IMR-90 (cell line): ENCODE measurements at regions of chr6 and their contacts with region 1.

Region 1: GRCh38 chr6:113858480-113859348 is 1.6 kb downstream of the MARCKS start:
- DNase-seq: peak; percentile 87
- ATAC-seq: peak; percentile 69
- H3K4me3 ChIP-seq: peak overlapping the region; percentile 95
- H3K27ac ChIP-seq: peak overlapping the region; percentile 96
- H3K4me1 ChIP-seq: no peaks in the 10 kb centered on the region
- H3K27me3 ChIP-seq: no peaks in the 10 kb centered on the region
- CTCF ChIP-seq: peak; percentile 96
- POLR2A ChIP-seq: peak; percentile 71; the same call in 1 of the 2 replicates
- RAD21 ChIP-seq: peak; percentile 95

Region 2: GRCh38 chr6:112780498-112781096 is 1078.1 kb before region 1 on chr6:
- CTCF ChIA-PET with region 1: interaction called, 6 read pairs
- POLR2A ChIA-PET with region 1: no interaction called
- dilution Hi-C with region 1: no loop called
- in situ Hi-C with region 1: no loop called
- intact Hi-C with region 1: loop called (anchors 1 kb)
- DNase-seq: peak; percentile 84
- ATAC-seq: peak; percentile 88
- H3K4me3 ChIP-seq: no peak overlapping the region
- H3K27ac ChIP-seq: no peak overlapping the region
- H3K4me1 ChIP-seq: peaks cover 2% of the 10 kb centered on the region; the same call in 1 of the 2 replicates
- H3K27me3 ChIP-seq: no peaks in the 10 kb centered on the region
- CTCF ChIP-seq: peak; percentile 88
- POLR2A ChIP-seq: no peak
- RAD21 ChIP-seq: peak; percentile 92

Region 3: GRCh38 chr6:113147544-113147943 is 711.2 kb before region 1 on chr6:
- CTCF ChIA-PET with region 1: no interaction called
- POLR2A ChIA-PET with region 1: no interaction called
- dilution Hi-C with region 1: no loop called
- in situ Hi-C with region 1: no loop called
- intact Hi-C with region 1: loop called (anchors 1 kb)
- DNase-seq: peak; percentile 94
- ATAC-seq: peak; percentile 97
- H3K4me3 ChIP-seq: no peak overlapping the region
- H3K27ac ChIP-seq: 0 out of 2 replicates have a peak overlapping the region, but pooled peaks have one; percentile 33
- H3K4me1 ChIP-seq: peaks cover 7% of the 10 kb centered on the region
- H3K27me3 ChIP-seq: no peaks in the 10 kb centered on the region
- CTCF ChIP-seq: no peak
- POLR2A ChIP-seq: no peak
- RAD21 ChIP-seq: no peak

Region 4: DNA sequence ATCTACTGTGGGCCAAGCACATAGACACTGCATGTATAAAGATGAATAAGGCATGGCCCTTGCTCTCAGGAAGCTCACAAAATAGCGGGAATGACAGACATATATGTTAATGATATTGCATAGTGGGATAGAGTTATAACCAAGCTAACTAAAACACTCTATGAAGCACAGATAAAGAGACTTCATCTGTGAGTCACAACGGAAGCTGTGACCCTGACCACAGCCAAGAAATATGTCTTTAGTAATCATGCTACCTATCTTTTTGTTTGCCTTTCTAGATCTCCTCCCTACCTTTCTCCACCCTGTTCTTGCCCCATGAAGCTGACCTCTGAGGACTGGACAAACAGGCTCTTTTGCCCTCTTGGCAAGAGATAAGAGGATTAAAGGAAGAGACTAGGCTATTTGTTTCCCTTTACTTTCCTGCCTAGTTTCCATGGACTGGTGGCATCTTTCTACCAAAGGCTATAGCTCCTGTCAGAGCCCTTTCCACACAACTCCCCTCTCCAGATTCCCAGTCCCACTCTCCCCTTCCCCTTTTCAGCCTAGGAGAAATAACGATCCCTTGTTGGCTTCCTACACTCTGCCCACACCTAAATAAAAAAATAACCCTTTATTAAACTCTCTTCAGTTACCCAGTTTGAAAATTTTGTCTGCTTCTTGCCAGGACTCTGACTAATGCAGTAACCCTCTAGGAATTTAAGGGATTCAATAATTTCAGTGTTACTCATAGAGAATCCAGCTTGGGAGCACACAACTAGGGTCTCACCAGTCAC is 506.5 kb before region 1 on chr6:
- CTCF ChIA-PET with region 1: interaction called, 3 read pairs
- POLR2A ChIA-PET with region 1: no interaction called
- dilution Hi-C with region 1: no loop called
- in situ Hi-C with region 1: no loop called
- intact Hi-C with region 1: loop called (anchors 2 kb)
- DNase-seq: peak; percentile 84
- ATAC-seq: peak; percentile 78
- H3K4me3 ChIP-seq: no peak overlapping the region
- H3K27ac ChIP-seq: peak overlapping the region; percentile 99
- H3K4me1 ChIP-seq: peaks cover 25% of the 10 kb centered on the region
- H3K27me3 ChIP-seq: no peaks in the 10 kb centered on the region
- CTCF ChIP-seq: no peak
- POLR2A ChIP-seq: no peak
- RAD21 ChIP-seq: no peak

Region 5: GRCh38 chr6:113457198-113457597 is 401.5 kb before region 1 on chr6:
- CTCF ChIA-PET with region 1: interaction called, 3 read pairs
- POLR2A ChIA-PET with region 1: no interaction called
- dilution Hi-C with region 1: no loop called
- in situ Hi-C with region 1: no loop called
- intact Hi-C with region 1: loop called (anchors 5 kb)
- DNase-seq: peak; percentile 81
- ATAC-seq: peak; percentile 63
- H3K4me3 ChIP-seq: no peak overlapping the region
- H3K27ac ChIP-seq: peak overlapping the region; percentile 74; the same call in 1 of the 2 replicates
- H3K4me1 ChIP-seq: peaks cover 11% of the 10 kb centered on the region
- H3K27me3 ChIP-seq: no peaks in the 10 kb centered on the region
- CTCF ChIP-seq: no peak
- POLR2A ChIP-seq: no peak
- RAD21 ChIP-seq: no peak

Region 6: GRCh38 chr6:113642714-113643406 is 215.9 kb before region 1 on chr6:
- CTCF ChIA-PET with region 1: no interaction called
- POLR2A ChIA-PET with region 1: no interaction called
- dilution Hi-C with region 1: no loop called
- in situ Hi-C with region 1: no loop called
- intact Hi-C with region 1: loop called (anchors 2 kb)
- DNase-seq: peak; percentile 28
- ATAC-seq: no peak
- H3K4me3 ChIP-seq: no peak overlapping the region
- H3K27ac ChIP-seq: no peak overlapping the region
- H3K4me1 ChIP-seq: peaks cover 6% of the 10 kb centered on the region
- H3K27me3 ChIP-seq: no peaks in the 10 kb centered on the region
- CTCF ChIP-seq: no peak
- POLR2A ChIP-seq: no peak
- RAD21 ChIP-seq: no peak

Region 7: DNA sequence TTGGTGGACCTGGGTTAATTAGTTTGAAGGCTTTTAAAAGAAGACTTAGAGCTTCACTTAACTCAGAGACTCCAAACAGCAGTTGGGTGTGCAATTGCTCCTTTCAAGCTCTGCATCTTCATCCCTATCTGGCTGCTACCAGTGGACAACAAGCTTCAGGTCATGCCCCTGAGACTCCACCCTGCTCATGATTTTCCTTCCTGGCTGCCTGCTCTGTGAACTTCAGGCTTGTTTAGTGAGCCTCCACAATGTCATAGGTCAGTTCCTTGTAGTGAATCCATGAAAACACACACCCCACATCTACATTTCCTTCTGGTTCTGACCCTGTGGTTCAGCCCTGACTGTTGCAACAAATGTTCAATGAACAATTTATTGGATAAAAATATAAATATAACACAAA is 62.7 kb before region 1 on chr6:
- CTCF ChIA-PET with region 1: no interaction called
- POLR2A ChIA-PET with region 1: no interaction called
- dilution Hi-C with region 1: no loop called
- in situ Hi-C with region 1: no loop called
- intact Hi-C with region 1: no loop called
- DNase-seq: no peak
- ATAC-seq: no peak
- H3K4me3 ChIP-seq: no peak overlapping the region
- H3K27ac ChIP-seq: no peak overlapping the region
- H3K4me1 ChIP-seq: no peaks in the 10 kb centered on the region
- H3K27me3 ChIP-seq: no peaks in the 10 kb centered on the region
- CTCF ChIP-seq: no peak
- POLR2A ChIP-seq: no peak
- RAD21 ChIP-seq: no peak